ENCODE measurements at regions of chr6 and their contacts with region 1.

Region 1: DNA sequence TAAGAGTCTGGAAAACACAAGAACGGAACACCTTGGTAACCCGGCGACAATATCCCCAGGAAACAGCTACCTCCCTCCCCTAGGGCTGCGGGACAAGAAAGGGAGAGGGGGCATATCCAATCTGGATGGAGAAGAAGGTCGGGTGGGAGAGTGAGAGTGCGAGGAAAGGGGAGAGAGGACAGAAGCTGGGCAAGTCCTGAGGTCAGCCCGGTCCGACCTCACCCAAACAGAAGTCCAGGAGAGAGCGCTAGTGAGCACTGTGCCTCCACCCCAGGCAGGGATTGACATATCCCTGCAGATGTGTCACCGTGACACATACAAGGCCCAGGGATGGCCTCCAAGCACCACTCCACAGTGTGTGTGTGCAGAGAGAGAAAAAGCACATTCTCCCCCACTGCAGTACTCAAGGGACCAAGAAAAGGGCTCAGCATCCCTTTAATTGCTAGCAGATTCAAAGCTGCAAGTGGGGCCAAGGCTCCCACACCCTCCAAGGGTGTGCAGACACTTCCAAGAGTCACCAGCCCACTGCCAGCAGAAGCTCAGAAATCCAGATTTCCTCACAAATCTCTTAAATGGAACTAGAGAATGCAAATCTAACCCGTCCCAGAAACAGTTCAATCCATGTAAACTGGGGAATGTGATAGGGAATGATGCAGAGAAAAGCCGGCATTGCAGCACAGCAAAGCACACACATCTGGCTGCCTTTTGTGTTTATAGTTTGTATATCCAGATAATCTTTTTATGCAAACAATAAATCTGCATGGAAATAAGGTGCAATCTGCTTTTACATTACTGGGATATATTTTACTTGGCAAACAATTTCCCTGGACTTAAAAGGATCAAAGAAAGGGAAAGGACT is 3.1 kb downstream of the PXDC1 start:
- DNase-seq: peak; percentile 68
- H3K4me3 ChIP-seq: peak overlapping the region in 1 of 4 donors; percentile 63
- H3K27ac ChIP-seq: peak overlapping the region; percentile 91 to 97 (median 92)
- H3K4me1 ChIP-seq: peaks cover 4 to 73% (median 49%) of the 10 kb centered on the region in 4 donors
- H3K27me3 ChIP-seq: peaks cover 16% of the 10 kb centered on the region
- CTCF ChIP-seq: peak; percentile 40 to 56 (median 53)
- EP300 ChIP-seq: no peak
- POLR2A ChIP-seq: no peak

Region 2: DNA sequence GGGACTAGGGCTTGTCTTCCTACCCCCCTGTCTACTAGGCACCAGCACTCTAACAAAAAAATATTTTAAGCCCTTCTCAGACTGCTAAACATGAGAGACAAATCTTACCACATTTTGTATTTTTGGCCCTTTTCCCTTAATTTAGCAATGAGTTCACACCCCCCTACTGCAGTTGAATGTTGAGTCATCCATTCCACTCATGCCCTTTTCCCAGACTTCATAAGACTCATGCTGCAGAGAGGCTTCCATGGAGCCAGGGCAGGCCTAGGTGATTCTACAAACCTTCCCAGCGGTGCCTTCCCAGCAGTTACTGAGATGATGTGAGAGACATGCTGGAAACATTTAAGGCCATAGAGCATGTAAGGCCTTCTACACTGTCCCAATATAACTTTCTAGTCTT is 50.8 kb before region 1 on chr6:
- in situ Hi-C with region 1: no loop called
- intact Hi-C with region 1: no loop called
- DNase-seq: no peak
- H3K4me3 ChIP-seq: no peak overlapping the region
- H3K27ac ChIP-seq: no peak overlapping the region
- H3K4me1 ChIP-seq: no peaks in the 10 kb centered on the region
- H3K27me3 ChIP-seq: no peaks in the 10 kb centered on the region
- CTCF ChIP-seq: no peak
- EP300 ChIP-seq: no peak
- POLR2A ChIP-seq: no peak

Region 3: GRCh38 chr6:3825851-3826581 is 77.6 kb after region 1 on chr6:
- in situ Hi-C with region 1: no loop called
- intact Hi-C with region 1: loop called (anchors 5 kb)
- DNase-seq: peak; percentile 78
- H3K4me3 ChIP-seq: peak overlapping the region in 1 of 4 donors; percentile 2
- H3K27ac ChIP-seq: peak overlapping the region; percentile 83 to 92 (median 84)
- H3K4me1 ChIP-seq: peaks cover 7 to 20% (median 13%) of the 10 kb centered on the region in 4 donors
- H3K27me3 ChIP-seq: no peaks in the 10 kb centered on the region
- CTCF ChIP-seq: no peak
- EP300 ChIP-seq: peak; percentile 52
- POLR2A ChIP-seq: no peak

Region 4: DNA sequence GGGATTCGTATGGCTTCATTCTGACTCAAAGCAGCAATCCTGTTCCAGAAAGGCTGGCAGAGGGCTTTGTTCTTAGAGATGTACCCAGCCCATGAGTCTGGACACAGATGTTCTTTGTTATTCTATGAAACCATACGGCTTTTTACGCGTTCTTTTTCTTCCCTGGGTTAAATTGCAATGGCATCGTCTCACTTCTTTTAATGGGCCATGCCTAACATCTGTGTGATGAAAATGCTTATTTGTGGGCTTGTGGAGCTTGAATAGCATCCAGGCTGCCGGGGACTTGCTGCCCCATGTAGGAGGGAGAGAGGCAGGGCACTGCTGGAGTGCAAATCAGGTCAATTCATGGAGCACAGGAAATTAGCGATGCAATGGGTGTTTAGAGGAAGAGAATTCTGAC is 120.1 kb after region 1 on chr6:
- in situ Hi-C with region 1: no loop called
- intact Hi-C with region 1: no loop called
- DNase-seq: no peak
- H3K4me3 ChIP-seq: no peak overlapping the region
- H3K27ac ChIP-seq: no peak overlapping the region
- H3K4me1 ChIP-seq: peaks cover 0 to 14% (median 8%) of the 10 kb centered on the region in 4 donors
- H3K27me3 ChIP-seq: no peaks in the 10 kb centered on the region
- CTCF ChIP-seq: no peak
- EP300 ChIP-seq: no peak
- POLR2A ChIP-seq: no peak

Region 5: GRCh38 chr6:3929281-3929798 is 180.9 kb after region 1 on chr6:
- in situ Hi-C with region 1: loop called in 1 of 4 experiments (anchors 5 kb)
- intact Hi-C with region 1: no loop called
- DNase-seq: no peak
- H3K4me3 ChIP-seq: no peak overlapping the region
- H3K27ac ChIP-seq: peak overlapping the region in 3 of 4 donors; percentile 46 to 48 (median 47)
- H3K4me1 ChIP-seq: no peaks in the 10 kb centered on the region
- H3K27me3 ChIP-seq: no peaks in the 10 kb centered on the region
- CTCF ChIP-seq: no peak
- EP300 ChIP-seq: no peak
- POLR2A ChIP-seq: no peak

Region 6: GRCh38 chr6:3990692-3991501 is 242.5 kb after region 1 on chr6:
- in situ Hi-C with region 1: loop called (anchors 5 to 10 kb)
- intact Hi-C with region 1: no loop called
- DNase-seq: peak; percentile 87
- H3K4me3 ChIP-seq: peak overlapping the region in 3 of 4 donors; percentile 20 to 46 (median 25)
- H3K27ac ChIP-seq: peak overlapping the region; percentile 48 to 69 (median 60)
- H3K4me1 ChIP-seq: peaks cover 5 to 20% (median 12%) of the 10 kb centered on the region in 4 donors
- H3K27me3 ChIP-seq: no peaks in the 10 kb centered on the region
- CTCF ChIP-seq: peak; percentile 79 to 87 (median 85)
- EP300 ChIP-seq: no peak
- POLR2A ChIP-seq: no peak